ENCODE measurements at regions of chr14 and their contacts with region 1.

Region 1: DNA sequence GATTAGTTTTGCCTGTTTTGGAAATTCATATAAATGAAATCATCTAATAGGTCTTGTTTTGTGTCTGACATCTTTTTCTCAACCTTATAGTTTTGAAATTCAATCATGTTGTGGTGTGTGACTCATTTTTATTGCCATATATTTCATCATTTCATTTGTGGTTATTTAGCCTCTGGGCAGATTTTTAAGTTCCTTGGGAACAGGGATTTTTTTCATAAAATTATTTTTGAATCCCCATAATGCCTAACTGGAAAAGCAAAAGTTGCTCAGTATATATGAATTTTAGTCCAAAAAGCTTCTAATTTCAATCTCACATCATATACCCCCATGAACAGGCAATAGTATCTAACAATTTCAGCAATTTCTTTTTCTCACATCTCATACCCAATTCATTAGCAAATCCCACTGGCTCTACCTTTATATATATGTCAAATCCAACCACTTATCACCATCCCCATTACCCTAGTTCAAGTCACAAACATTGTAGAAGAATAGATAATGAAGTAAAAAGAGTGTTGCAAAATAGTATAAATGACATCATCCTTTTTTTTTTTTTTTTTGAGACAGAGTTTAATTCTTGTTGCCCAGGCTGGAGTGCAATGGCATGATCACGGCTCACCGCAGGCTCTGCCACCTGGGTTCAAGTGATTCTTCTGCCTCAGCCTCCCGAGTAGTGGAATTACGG is 2.6 kb upstream of the OR6J1 start:
- DNase-seq: no peak
- ATAC-seq: no peak
- H3K4me3 ChIP-seq: no peak overlapping the region
- H3K27ac ChIP-seq: no peak overlapping the region
- H3K4me1 ChIP-seq: no peaks in the 10 kb centered on the region
- H3K27me3 ChIP-seq: no peaks in the 10 kb centered on the region
- CTCF ChIP-seq: no peak

Region 2: GRCh38 chr14:22549981-22550673 is 96.6 kb before region 1 on chr14:
- intact Hi-C with region 1: loop called in 2 of 3 experiments (anchors 5 to 10 kb)
- DNase-seq: no peak
- ATAC-seq: no peak
- H3K4me3 ChIP-seq: no peak overlapping the region
- H3K27ac ChIP-seq: no peak overlapping the region
- H3K4me1 ChIP-seq: peaks cover 0 to 11% (median 7%) of the 10 kb centered on the region in 3 donors
- H3K27me3 ChIP-seq: no peaks in the 10 kb centered on the region
- CTCF ChIP-seq: no peak

Region 3: GRCh38 chr14:22570132-22570949 is 76.4 kb before region 1 on chr14:
- intact Hi-C with region 1: loop called in 1 of 3 experiments (anchors 10 kb)
- DNase-seq: peak in 3 of 6 donors; percentile 53 to 78 (median 77)
- ATAC-seq: peak; percentile 75 to 90 (median 86)
- H3K4me3 ChIP-seq: no peak overlapping the region
- H3K27ac ChIP-seq: peak overlapping the region in 2 of 4 donors; percentile 52 to 70
- H3K4me1 ChIP-seq: peaks cover 8 to 38% (median 22%) of the 10 kb centered on the region in 3 donors
- H3K27me3 ChIP-seq: no peaks in the 10 kb centered on the region
- CTCF ChIP-seq: peak; percentile 61 to 87 (median 76)

Region 4: GRCh38 chr14:22726012-22726411 is 79.3 kb after region 1 on chr14:
- intact Hi-C with region 1: no loop called
- DNase-seq: no peak
- ATAC-seq: no peak
- H3K4me3 ChIP-seq: no peak overlapping the region
- H3K27ac ChIP-seq: no peak overlapping the region
- H3K4me1 ChIP-seq: no peaks in the 10 kb centered on the region
- H3K27me3 ChIP-seq: no peaks in the 10 kb centered on the region
- CTCF ChIP-seq: no peak

Measured in pancreas (tissue), 10 donors.